ENCODE measurements at regions of chr3 and their contacts with region 1.

Region 1: DNA sequence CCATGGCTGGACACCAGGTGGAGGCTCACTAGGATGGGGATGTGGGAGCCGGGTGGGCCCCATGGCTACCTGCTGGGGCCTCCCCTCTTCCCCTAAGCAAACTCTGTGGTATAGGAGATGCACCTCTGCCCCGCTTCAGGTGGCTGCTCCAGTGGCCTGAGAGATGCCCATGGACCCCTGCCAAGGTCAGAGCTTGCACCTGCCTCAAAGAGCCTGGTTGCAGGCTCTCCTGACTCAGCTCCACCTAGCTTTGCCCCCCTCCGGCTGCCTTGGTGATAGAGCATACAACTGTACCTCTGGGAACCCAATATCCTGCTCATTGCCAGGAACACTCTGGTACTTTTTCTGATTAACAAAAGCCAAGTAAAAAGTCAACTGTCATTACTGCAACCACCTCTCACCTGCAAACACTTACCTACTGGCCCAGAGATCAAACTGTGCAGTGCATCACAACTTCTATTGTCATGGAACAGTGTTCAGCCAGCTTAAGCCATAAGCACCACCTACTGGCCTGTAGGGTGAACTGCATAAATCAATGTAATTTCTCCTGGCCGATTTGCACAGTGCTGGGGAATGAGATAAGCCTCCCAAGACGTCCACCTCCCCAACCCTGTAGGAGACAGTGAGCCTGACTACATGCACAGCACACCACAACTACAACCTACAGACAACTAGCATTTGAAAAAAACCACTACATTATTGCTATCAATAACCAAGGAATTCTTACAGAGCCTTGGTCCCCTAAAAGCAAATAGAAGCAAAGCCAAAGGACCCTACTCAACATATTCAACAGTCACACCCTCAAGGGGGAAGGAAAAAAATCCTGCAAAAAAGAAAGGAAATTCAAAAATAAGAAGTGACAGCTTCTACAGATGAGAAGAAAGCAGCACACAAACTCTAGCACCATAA is 352.4 kb upstream of the ARHGEF26 start:
- DNase-seq: peak; percentile 75
- H3K4me3 Mint-ChIP-seq: no peak overlapping the region
- H3K27ac Mint-ChIP-seq: no peak overlapping the region
- H3K4me1 Mint-ChIP-seq: peaks cover 11% of the 10 kb centered on the region
- H3K27me3 Mint-ChIP-seq: no peaks in the 10 kb centered on the region
- CTCF ChIP-seq: peak; percentile 96

Region 2: GRCh38 chr3:153043729-153044328 is 725.0 kb before region 1 on chr3:
- CTCF ChIA-PET with region 1: interaction called, 3 read pairs
- intact Hi-C with region 1: loop called (anchors 5 kb)
- DNase-seq: no peak
- H3K4me3 Mint-ChIP-seq: peak overlapping the region; percentile 29
- H3K27ac Mint-ChIP-seq: peak overlapping the region; percentile 84
- H3K4me1 Mint-ChIP-seq: peaks cover 66% of the 10 kb centered on the region
- H3K27me3 Mint-ChIP-seq: no peaks in the 10 kb centered on the region
- CTCF ChIP-seq: no peak

Region 3: GRCh38 chr3:153291056-153291685 is 477.6 kb before region 1 on chr3:
- CTCF ChIA-PET with region 1: no interaction called
- intact Hi-C with region 1: loop called (anchors 1 kb)
- DNase-seq: peak; percentile 47
- H3K4me3 Mint-ChIP-seq: no peak overlapping the region
- H3K27ac Mint-ChIP-seq: no peak overlapping the region
- H3K4me1 Mint-ChIP-seq: peaks cover 37% of the 10 kb centered on the region
- H3K27me3 Mint-ChIP-seq: no peaks in the 10 kb centered on the region
- CTCF ChIP-seq: peak; percentile 71

Region 4: DNA sequence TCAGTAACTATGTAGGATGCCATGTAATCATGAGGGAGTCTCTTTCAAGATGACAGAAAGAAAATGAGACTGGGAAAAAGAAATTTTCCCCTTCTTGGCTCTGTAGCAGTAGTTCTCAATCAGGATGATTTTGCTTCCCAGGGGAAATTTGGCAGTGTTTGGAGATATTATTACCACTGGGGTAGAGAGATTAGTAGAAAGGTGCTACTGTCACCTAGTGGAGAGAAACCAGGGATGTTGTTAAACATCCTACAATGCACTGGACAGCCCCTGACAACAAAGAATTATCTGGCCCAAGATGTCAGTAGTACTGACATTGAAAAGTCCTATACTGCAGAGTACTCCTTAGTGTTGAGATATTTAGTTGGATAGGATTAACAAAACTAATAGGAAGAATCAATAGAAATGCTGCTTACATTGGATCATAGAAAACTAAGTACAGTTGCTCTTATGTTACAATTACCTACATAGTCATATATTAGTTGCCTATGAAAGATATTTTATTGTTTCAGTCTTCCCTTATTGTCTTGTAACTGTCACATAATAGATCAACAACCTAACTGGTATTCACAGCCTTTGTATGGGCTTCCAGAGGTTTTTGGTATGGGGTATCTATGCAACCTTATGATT is 173.5 kb before region 1 on chr3:
- CTCF ChIA-PET with region 1: interaction called, 5 read pairs
- intact Hi-C with region 1: loop called (anchors 1 kb)
- DNase-seq: peak; percentile 32
- H3K4me3 Mint-ChIP-seq: no peak overlapping the region
- H3K27ac Mint-ChIP-seq: no peak overlapping the region
- H3K4me1 Mint-ChIP-seq: peaks cover 44% of the 10 kb centered on the region
- H3K27me3 Mint-ChIP-seq: no peaks in the 10 kb centered on the region
- CTCF ChIP-seq: peak; percentile 87

Region 5: GRCh38 chr3:153619268-153619667 is 149.5 kb before region 1 on chr3:
- CTCF ChIA-PET with region 1: no interaction called
- intact Hi-C with region 1: no loop called
- DNase-seq: no peak
- H3K4me3 Mint-ChIP-seq: no peak overlapping the region
- H3K27ac Mint-ChIP-seq: no peak overlapping the region
- H3K4me1 Mint-ChIP-seq: peaks cover 24% of the 10 kb centered on the region
- H3K27me3 Mint-ChIP-seq: no peaks in the 10 kb centered on the region
- CTCF ChIP-seq: no peak

Region 6: DNA sequence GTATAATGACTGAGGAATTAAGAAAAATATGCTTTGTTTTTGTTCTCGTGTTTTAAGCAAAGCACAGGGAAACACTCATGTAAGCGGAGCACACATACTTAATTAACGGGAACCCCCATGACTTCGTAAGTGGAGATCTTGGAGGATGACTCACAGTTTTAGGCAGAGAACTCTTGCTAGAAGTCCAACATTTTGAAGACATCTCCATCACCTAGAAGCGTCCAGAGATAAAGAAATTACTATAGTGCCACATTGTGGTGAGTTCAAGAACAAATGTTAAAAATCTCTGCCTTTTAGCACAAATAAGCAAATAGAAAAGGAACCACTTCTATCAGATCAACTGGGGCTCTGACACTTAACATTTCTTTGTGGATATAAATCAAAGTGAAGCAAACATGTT is 158.3 kb after region 1 on chr3:
- CTCF ChIA-PET with region 1: no interaction called
- intact Hi-C with region 1: loop called (anchors 5 kb)
- DNase-seq: no peak
- H3K4me3 Mint-ChIP-seq: no peak overlapping the region
- H3K27ac Mint-ChIP-seq: no peak overlapping the region
- H3K4me1 Mint-ChIP-seq: no peaks in the 10 kb centered on the region
- H3K27me3 Mint-ChIP-seq: no peaks in the 10 kb centered on the region
- CTCF ChIP-seq: peak; percentile 38

Measured in Calu3 (cell line).